Mammary epithelial cell (primary cell): ENCODE measurements at regions of chr9 and their contacts with region 1.

Region 1: DNA sequence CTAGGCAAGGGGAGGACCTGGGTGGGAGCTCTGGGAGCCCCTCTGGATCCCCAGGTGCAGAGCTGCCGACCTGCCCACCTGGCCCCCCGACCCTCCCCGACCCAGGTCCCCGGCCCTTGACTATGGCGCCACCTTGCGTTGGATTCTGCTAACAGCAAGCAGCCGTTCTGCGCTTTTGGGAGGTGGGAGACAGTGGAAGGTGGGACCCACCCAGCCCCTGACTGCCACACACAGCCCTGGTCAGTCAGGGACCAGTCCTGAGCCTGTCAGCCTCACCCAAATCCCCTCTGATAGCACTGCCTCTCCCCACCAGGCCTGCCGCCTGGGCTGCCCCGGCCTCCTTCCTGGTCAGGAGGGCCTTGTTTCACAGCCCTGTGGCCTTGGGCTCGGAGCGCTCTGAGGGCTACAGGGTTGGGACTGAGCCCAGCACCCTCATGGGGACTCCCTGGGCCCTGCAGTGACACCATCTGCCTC is 77.9 kb downstream of the HMCN2 start:
- DNase-seq: no peak
- H3K4me3 ChIP-seq: no peak overlapping the region
- H3K27ac ChIP-seq: no peak overlapping the region
- H3K4me1 ChIP-seq: no peaks in the 10 kb centered on the region
- H3K27me3 ChIP-seq: no peaks in the 10 kb centered on the region
- CTCF ChIP-seq: peak; percentile 44 to 67

Region 2: GRCh38 chr9:130298663-130299279 is 44.7 kb before region 1 on chr9:
- CTCF ChIA-PET with region 1: no interaction called
- dilution Hi-C with region 1: no loop called
- in situ Hi-C with region 1: no loop called
- intact Hi-C with region 1: no loop called
- DNase-seq: no peak
- H3K4me3 ChIP-seq: no peak overlapping the region
- H3K27ac ChIP-seq: no peak overlapping the region
- H3K4me1 ChIP-seq: no peaks in the 10 kb centered on the region
- H3K27me3 ChIP-seq: no peaks in the 10 kb centered on the region
- CTCF ChIP-seq: no peak

Region 3: GRCh38 chr9:130379649-130379970 is 36.1 kb after region 1 on chr9:
- CTCF ChIA-PET with region 1: no interaction called
- dilution Hi-C with region 1: loop called (anchors 5 kb)
- in situ Hi-C with region 1: no loop called
- intact Hi-C with region 1: no loop called
- DNase-seq: no peak
- H3K4me3 ChIP-seq: no peak overlapping the region
- H3K27ac ChIP-seq: no peak overlapping the region
- H3K4me1 ChIP-seq: no peaks in the 10 kb centered on the region
- H3K27me3 ChIP-seq: no peaks in the 10 kb centered on the region
- CTCF ChIP-seq: no peak